ENCODE measurements at regions of chr4 and their contacts with region 1.

Region 1: DNA sequence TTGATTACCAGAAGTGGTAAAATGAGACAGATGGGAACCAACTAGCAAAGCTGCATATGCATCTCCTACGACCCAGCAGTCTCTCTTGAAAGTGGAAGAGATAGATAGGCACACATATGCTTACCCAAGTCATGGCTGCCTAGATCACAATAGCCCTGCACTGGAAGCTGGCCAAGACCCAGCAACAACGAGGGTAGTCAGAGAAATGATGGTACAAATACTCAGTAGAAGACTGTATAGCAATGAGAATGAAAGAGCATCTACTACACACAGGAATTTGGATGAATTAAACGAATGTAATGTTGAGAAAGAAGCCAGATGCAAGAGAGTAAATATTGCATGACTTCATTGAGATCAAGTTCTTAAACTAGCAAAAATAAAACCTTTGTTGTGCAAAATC is 100.3 kb upstream of the FAT1 start:
- DNase-seq: no peak
- H3K4me3 ChIP-seq: no peak overlapping the region
- H3K27ac ChIP-seq: no peak overlapping the region
- H3K4me1 ChIP-seq: no peaks in the 10 kb centered on the region
- H3K27me3 ChIP-seq: no peaks in the 10 kb centered on the region
- CTCF ChIP-seq: no peak

Region 2: DNA sequence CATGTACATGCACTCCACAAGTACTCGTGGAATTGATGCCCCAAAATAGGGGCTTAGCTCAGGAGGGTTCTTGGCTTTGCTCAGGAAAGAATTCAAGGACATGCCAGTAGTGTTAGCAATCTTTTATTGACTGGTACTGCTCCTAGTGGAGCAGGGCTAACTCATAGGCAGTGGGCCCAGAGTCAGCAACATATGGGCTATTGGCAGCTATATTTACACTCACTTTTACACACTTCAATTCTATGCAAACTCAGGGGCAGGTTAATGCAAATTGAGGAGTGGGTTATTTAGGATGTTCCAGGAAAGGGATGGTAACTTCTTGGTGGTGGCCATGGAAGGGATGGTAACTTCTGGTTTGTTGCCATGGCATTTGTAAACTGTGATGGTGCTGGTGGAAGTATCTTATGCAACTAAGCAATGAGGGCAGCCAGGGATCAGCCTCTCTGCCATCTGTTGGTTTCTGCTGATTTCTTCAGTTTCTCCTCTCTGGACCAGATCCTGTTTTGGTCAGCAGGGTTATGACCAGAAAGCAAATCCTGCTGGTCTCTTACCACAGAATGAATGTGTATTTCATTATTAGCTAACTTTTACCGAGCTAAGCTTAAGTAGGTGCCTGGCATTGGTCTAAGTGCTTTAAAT is 31.1 kb before region 1 on chr4:
- CTCF ChIA-PET with region 1: no interaction called
- POLR2A ChIA-PET with region 1: no interaction called
- intact Hi-C with region 1: no loop called
- DNase-seq: no peak
- H3K4me3 ChIP-seq: no peak overlapping the region
- H3K27ac ChIP-seq: no peak overlapping the region
- H3K4me1 ChIP-seq: no peaks in the 10 kb centered on the region
- H3K27me3 ChIP-seq: no peaks in the 10 kb centered on the region
- CTCF ChIP-seq: no peak

Region 3: DNA sequence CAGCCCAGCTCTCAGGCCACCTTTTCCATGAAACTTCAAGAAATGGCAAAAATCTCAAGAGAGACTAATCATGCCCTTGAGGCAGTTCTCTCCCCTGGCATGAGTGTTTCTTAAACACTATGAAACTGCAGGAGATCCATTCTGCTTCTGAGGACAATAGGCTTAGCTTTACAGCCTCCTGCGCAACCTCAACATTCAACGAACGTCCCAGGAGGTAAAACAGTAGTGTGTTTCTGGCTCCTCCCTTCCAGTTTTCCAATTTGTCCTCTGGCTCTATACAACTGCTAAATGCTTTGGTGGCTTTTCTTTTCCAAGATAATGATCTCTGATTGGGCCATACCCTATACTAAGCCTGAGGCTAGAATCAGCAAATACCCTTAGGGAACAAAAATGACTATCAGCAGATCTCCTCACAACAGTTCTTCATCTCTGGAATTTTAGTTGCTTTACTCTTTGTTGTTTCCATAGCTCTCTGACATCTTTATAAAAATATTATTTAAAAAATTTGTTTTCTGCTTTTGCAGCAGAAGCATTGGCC is 13.3 kb before region 1 on chr4:
- CTCF ChIA-PET with region 1: no interaction called
- POLR2A ChIA-PET with region 1: interaction called, 12 read pairs
- intact Hi-C with region 1: no loop called
- DNase-seq: no peak
- H3K4me3 ChIP-seq: no peak overlapping the region
- H3K27ac ChIP-seq: no peak overlapping the region
- H3K4me1 ChIP-seq: no peaks in the 10 kb centered on the region
- H3K27me3 ChIP-seq: no peaks in the 10 kb centered on the region
- CTCF ChIP-seq: no peak